H1 (cell line): ENCODE measurements at regions of chr2 and their contacts with region 1.

Region 1: GRCh38 chr2:85327822-85328617 is at the start of gene TGOLN2:
- DNase-seq: peak; percentile 58 to 94
- H3K4me3 ChIP-seq: peak within 1 kb of the TSS; percentile 61 to 96 (median 84)
- H3K27ac ChIP-seq: peak within 1 kb of the TSS; percentile 99
- H3K4me1 ChIP-seq: peaks cover 0 to 13% (median 7%) of the 10 kb centered on the region in 4 experiments; a peak in 6 of 7 replicates
- H3K27me3 ChIP-seq: no peaks in the 10 kb centered on the region; a peak in 1 of 7 replicates
- CTCF ChIP-seq: peak in 1 of 3 experiments; percentile 8; a peak in 2 of 4 replicates
- EP300 ChIP-seq: no peak
- POLR2A ChIP-seq: peak; percentile 99 to 100
- RAD21 ChIP-seq: no peak; a peak in 1 of 4 replicates
- total RNA-seq, gene TGOLN2: 36.3 and 38.9 TPM in 2 replicates

Region 2: DNA sequence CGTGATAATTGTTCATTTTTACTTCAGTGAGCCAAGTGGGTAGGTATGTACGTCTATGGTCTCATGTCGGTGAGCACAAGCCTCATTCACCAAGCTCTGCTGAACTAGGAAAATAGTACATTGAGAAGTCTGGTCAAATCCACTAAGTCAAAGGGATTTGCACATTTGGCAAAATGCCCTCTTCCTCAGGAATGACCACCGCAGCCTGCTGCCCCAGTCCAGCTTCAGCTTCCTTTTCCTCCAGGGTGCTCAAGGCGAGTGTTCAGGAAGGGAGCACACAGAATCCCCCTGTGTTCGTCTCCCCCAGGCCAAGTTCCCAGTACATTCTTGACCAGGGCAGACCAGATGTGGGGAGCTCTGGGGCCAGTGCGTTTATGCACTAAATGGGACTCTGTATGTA is 171.9 kb before region 1 on chr2:
- CTCF ChIA-PET with region 1: no interaction called
- POLR2A ChIA-PET with region 1: no interaction called
- DNase-seq: no peak
- H3K4me3 ChIP-seq: no peak overlapping the region
- H3K27ac ChIP-seq: no peak overlapping the region
- H3K4me1 ChIP-seq: peaks cover 2 to 18% (median 10%) of the 10 kb centered on the region in 4 experiments; a peak in 6 of 7 replicates
- H3K27me3 ChIP-seq: no peaks in the 10 kb centered on the region
- CTCF ChIP-seq: no peak
- EP300 ChIP-seq: no peak
- POLR2A ChIP-seq: no peak
- RAD21 ChIP-seq: no peak

Region 3: GRCh38 chr2:85308896-85309555 is 19.0 kb before region 1 on chr2:
- CTCF ChIA-PET with region 1: interaction called, 4 read pairs
- POLR2A ChIA-PET with region 1: interaction called, 70 read pairs
- DNase-seq: no peak
- H3K4me3 ChIP-seq: no peak overlapping the region
- H3K27ac ChIP-seq: no peak overlapping the region
- H3K4me1 ChIP-seq: peaks cover 0 to 8% (median 2%) of the 10 kb centered on the region in 4 experiments; a peak in 5 of 7 replicates
- H3K27me3 ChIP-seq: no peaks in the 10 kb centered on the region
- CTCF ChIP-seq: no peak
- EP300 ChIP-seq: no peak
- POLR2A ChIP-seq: no peak
- RAD21 ChIP-seq: no peak